ENCODE measurements at regions of chr6 and their contacts with region 1.

Region 1: GRCh38 chr6:92822222-92822621 is 597.1 kb downstream of the EPHA7 start:
- DNase-seq: no peak
- H3K4me3 ChIP-seq: no peak overlapping the region
- H3K27ac ChIP-seq: no peak overlapping the region
- H3K4me1 ChIP-seq: no peaks in the 10 kb centered on the region
- H3K27me3 ChIP-seq: no peaks in the 10 kb centered on the region
- CTCF ChIP-seq: no peak
- EP300 ChIP-seq: no peak
- RAD21 ChIP-seq: no peak

Region 2: DNA sequence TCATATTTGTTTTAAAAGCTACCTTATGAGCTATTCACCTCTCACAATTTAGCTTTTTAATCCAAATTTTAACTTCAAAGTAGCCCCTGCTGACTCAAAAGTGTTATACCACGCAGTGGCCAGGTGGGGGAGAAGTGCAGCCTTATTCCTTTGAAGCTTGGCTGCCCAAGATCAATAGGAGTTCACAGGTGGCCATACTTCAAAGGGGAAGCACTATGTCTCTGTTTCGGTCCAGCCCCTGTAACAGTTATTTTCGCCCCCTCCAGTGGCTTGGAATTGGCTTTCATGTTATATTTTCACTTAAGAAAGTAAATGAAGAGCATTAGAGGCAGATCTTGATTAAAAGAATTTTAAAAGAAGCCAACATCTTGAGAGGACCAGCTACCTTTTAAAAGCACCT is 11.3 kb before region 1 on chr6:
- CTCF ChIA-PET with region 1: interaction called, 17 read pairs
- POLR2A ChIA-PET with region 1: no interaction called
- DNase-seq: peak; percentile 47
- H3K4me3 ChIP-seq: peak overlapping the region in 1 of 2 experiments; percentile 20; a peak in 1 of 4 replicates
- H3K27ac ChIP-seq: no peak overlapping the region
- H3K4me1 ChIP-seq: no peaks in the 10 kb centered on the region
- H3K27me3 ChIP-seq: no peaks in the 10 kb centered on the region
- CTCF ChIP-seq: peak; percentile 61
- EP300 ChIP-seq: no peak
- RAD21 ChIP-seq: peak; percentile 53

Measured in SK-N-SH (cell line).